SK-MEL-5 (cell line): ENCODE measurements at regions of chr9 and their contacts with region 1.

Region 1: GRCh38 chr9:99948896-99949295 is 42.4 kb downstream of the STX17 start:
- DNase-seq: no peak

Region 2: DNA sequence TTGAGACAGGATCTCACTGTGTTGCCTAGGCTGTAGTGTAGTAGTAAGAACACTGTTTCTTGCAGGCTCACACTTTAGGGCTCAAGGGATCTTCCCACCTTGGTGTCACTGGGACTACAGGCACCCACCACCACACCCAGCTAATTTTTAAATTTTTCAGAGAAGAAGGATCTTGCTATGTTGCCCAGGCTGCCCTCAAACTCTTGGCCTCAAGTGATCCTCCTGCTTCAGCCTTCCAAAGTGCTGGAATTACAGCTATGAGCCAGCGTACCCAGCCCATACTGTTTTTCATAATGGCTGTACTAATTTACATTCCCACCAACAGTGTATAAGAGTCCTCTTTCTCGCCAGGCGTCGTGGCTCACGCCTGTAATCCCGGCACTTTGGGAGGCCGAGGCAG is 37.3 kb before region 1 on chr9:
- in situ Hi-C with region 1: loop called (anchors 5 kb)
- DNase-seq: no peak

Region 3: GRCh38 chr9:99986642-99987041 is 37.7 kb after region 1 on chr9:
- in situ Hi-C with region 1: no loop called
- DNase-seq: no peak

Region 4: GRCh38 chr9:100084734-100085133 is 135.8 kb after region 1 on chr9:
- in situ Hi-C with region 1: no loop called
- DNase-seq: no peak